Posterior vena cava (tissue), 2 donors: ENCODE measurements at regions of chr15 and their contacts with region 1.

Region 1: GRCh38 chr15:26525096-26525495 is 247.8 kb downstream of the GABRB3 start:
- DNase-seq: no peak

Region 2: GRCh38 chr15:26550880-26551279 is 25.8 kb after region 1 on chr15:
- intact Hi-C with region 1: loop called in 1 of 2 experiments (anchors 1 kb)
- DNase-seq: no peak

Region 3: GRCh38 chr15:26580943-26581342 is 55.8 kb after region 1 on chr15:
- intact Hi-C with region 1: no loop called
- DNase-seq: no peak